PC-9 (cell line): ENCODE measurements at regions of chr5 and their contacts with region 1.

Region 1: DNA sequence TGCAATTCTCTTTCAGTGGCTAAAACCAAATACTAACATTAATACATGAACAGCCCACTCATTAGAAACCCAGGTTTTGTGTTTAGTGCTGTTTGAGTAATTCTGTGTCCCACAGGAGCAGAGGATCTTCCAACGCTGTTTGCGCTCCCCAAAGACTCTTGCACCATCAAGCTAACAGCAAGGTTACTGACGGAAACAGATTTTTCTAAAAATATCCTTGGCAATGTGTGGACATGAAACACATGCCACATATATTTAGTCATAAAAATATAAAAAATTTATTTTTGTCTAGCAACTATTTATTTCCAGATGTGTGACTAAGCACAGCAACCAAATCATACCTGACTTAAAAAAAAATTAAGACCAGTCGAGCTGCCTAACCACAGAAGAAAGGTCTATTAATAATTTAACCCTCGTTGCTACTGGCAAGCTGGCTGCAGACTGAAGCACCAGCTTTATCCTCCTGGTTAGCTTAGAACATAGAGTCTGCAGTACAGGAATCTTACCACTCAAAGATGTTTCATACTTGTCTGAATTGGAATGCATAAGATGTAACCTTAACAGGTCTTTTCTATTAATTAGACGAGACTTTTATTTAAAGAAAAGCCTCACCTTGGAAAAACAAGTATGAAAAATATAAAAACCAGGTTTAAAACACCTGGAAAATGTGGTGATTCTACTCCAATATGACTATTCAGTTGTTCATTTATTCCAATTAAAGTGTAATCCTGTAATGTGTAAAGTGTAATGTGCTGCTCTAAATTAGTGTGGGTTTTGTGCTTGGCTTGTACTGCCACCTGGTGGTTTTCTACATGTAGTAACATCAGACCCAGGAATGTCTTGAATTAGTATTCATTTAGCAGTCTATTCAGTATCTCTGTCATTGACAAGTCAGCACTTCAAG is 272.5 kb downstream of the EPB41L4A start:
- DNase-seq: peak; percentile 29 to 67
- H3K4me3 ChIP-seq: no peak overlapping the region
- H3K27ac ChIP-seq: no peak overlapping the region
- H3K4me1 ChIP-seq: no peaks in the 10 kb centered on the region
- H3K27me3 ChIP-seq: no peaks in the 10 kb centered on the region
- CTCF ChIP-seq: peak; percentile 88

Region 2: GRCh38 chr5:110757118-110757729 is 1389.4 kb before region 1 on chr5:
- CTCF ChIA-PET with region 1: no interaction called
- POLR2A ChIA-PET with region 1: no interaction called
- intact Hi-C with region 1: loop called (anchors 5 kb)
- DNase-seq: peak in 1 of 2 experiments; percentile 38
- H3K4me3 ChIP-seq: no peak overlapping the region
- H3K27ac ChIP-seq: no peak overlapping the region
- H3K4me1 ChIP-seq: no peaks in the 10 kb centered on the region
- H3K27me3 ChIP-seq: no peaks in the 10 kb centered on the region
- CTCF ChIP-seq: peak; percentile 86

Region 3: DNA sequence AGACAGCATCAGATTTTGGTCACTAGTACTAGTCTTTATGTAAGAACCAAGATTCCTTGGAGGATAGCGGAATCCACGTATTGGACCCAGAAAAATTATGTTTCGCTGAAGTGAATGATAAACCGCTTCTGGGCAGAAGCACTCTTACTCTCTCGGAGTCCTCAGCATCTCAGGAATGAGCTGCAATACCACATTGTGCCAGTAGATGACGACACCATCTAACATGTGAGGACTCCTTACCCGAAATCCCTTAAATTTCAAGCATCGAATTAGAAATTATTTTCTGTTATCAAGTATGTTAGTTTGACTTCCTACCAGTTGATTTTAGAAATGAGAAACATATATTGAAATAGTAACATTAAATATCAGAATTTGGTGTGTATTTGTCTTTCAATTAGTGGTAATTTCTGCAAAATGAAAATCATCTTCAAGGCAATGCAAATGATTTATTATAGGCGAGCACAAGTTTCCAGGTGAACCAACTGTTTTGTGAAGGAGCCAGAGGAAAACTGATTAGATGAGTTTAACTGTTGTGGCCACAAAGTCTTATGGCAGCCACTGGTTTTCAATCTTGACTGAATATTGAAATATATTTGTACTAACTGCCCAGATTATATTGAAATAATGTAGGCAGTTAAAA is 988.4 kb before region 1 on chr5:
- CTCF ChIA-PET with region 1: no interaction called
- POLR2A ChIA-PET with region 1: no interaction called
- intact Hi-C with region 1: loop called (anchors 1 kb)
- DNase-seq: peak; percentile 42 to 49
- H3K4me3 ChIP-seq: no peak overlapping the region
- H3K27ac ChIP-seq: no peak overlapping the region
- H3K4me1 ChIP-seq: no peaks in the 10 kb centered on the region
- H3K27me3 ChIP-seq: no peaks in the 10 kb centered on the region; the same call in none of the 2 replicates
- CTCF ChIP-seq: peak; percentile 98

Region 4: DNA sequence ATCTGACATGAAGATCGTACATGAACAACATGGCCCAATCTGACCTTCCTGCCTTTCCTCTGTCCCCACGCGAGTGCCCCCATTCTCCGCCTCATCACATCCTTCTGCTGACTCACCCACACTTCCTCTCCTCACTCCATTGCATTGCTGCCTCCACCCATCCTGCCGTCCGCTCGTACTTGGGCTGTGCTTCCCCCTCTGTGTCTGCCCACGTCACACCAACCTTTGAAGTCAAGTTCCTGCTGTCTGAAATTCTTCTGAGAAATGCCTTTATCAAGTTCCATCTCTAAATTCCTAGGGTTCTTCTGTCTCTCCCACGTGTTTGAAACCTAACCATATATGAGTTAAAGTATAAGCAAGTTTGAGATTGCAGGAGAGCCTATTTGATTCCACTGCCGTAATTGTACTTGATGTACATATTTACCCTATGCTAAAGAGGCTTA is 616.3 kb before region 1 on chr5:
- CTCF ChIA-PET with region 1: no interaction called
- POLR2A ChIA-PET with region 1: no interaction called
- intact Hi-C with region 1: loop called (anchors 5 kb)
- DNase-seq: no peak
- H3K4me3 ChIP-seq: no peak overlapping the region
- H3K27ac ChIP-seq: no peak overlapping the region
- H3K4me1 ChIP-seq: no peaks in the 10 kb centered on the region
- H3K27me3 ChIP-seq: no peaks in the 10 kb centered on the region
- CTCF ChIP-seq: no peak

Region 5: GRCh38 chr5:111550279-111551020 is 596.1 kb before region 1 on chr5:
- CTCF ChIA-PET with region 1: no interaction called
- POLR2A ChIA-PET with region 1: no interaction called
- intact Hi-C with region 1: loop called (anchors 1 kb)
- DNase-seq: peak; percentile 38 to 61
- H3K4me3 ChIP-seq: no peak overlapping the region
- H3K27ac ChIP-seq: no peak overlapping the region
- H3K4me1 ChIP-seq: no peaks in the 10 kb centered on the region
- H3K27me3 ChIP-seq: no peaks in the 10 kb centered on the region
- CTCF ChIP-seq: peak; percentile 72

Region 6: DNA sequence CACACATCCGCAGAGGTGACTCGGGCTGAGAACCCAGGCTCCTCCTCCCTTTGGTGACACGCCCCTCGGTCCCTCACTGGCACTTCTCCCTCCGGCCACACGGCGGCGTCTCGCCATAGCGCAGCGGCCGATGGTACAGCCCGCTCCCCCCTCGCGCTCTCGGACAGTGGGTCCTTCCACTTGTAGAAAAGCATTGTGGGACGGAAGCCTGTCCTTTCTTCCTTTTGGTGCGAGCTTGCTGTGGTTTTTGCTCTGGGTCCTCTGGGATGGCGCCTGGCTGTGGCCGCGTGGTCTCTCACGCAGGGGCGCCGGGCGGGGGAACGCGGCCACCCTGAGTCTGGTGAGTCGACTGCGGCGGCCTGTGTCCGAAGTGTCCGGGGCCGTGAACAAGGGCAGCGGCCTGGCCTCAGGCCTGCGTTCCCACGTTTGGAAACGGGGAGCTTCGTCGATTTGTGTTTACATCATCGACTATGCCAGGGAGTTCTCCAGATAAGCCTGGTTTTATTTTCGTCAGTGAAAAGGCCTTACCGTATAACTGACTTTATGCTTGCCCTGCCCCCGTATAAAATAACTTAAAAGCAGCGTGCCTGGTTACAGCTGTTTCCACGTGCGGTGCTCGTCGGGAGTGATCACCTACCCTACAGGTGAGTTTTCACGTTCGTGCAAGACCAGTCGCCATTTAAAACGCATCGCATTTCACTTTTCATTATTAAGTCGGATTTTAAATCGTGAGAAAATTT is 14.2 kb after region 1 on chr5:
- CTCF ChIA-PET with region 1: no interaction called
- POLR2A ChIA-PET with region 1: no interaction called
- intact Hi-C with region 1: no loop called
- DNase-seq: peak; percentile 71 to 89
- H3K4me3 ChIP-seq: peak overlapping the region; percentile 85
- H3K27ac ChIP-seq: peak overlapping the region; percentile 73
- H3K4me1 ChIP-seq: peaks cover 16% of the 10 kb centered on the region
- H3K27me3 ChIP-seq: no peaks in the 10 kb centered on the region
- CTCF ChIP-seq: peak; percentile 94